ENCODE measurements at regions of chr6 and their contacts with region 1.

Region 1: GRCh38 chr6:131782764-131783163 is 25.1 kb upstream of the ENPP1 start:
- DNase-seq: no peak
- ATAC-seq: no peak
- H3K4me3 ChIP-seq: no peak overlapping the region
- H3K27ac ChIP-seq: no peak overlapping the region
- H3K4me1 ChIP-seq: no peaks in the 10 kb centered on the region
- H3K27me3 ChIP-seq: no peaks in the 10 kb centered on the region
- CTCF ChIP-seq: peak; percentile 20

Region 2: GRCh38 chr6:131804131-131804530 is 21.4 kb after region 1 on chr6:
- intact Hi-C with region 1: loop called in 1 of 2 experiments (anchors 1 kb)
- DNase-seq: no peak
- ATAC-seq: no peak
- H3K4me3 ChIP-seq: no peak overlapping the region
- H3K27ac ChIP-seq: no peak overlapping the region
- H3K4me1 ChIP-seq: peaks cover 4% of the 10 kb centered on the region
- H3K27me3 ChIP-seq: no peaks in the 10 kb centered on the region
- CTCF ChIP-seq: no peak